Gastrocnemius medialis (tissue), 4 donors: ENCODE measurements at regions of chr1 and their contacts with region 1.

Region 1: GRCh38 chr1:230861970-230862595 is 6.2 kb downstream of the C1orf198 start:
- DNase-seq: peak; percentile 91 to 93
- ATAC-seq: peak; percentile 85
- H3K4me3 ChIP-seq: no peak overlapping the region
- H3K27ac ChIP-seq: peak overlapping the region; percentile 80 to 95 (median 89)
- H3K4me1 ChIP-seq: peaks cover 80 to 93% of the 10 kb centered on the region in 2 donors
- H3K27me3 ChIP-seq: no peaks in the 10 kb centered on the region
- CTCF ChIP-seq: no peak
- POLR2A ChIP-seq: peak; percentile 19 to 74

Region 2: DNA sequence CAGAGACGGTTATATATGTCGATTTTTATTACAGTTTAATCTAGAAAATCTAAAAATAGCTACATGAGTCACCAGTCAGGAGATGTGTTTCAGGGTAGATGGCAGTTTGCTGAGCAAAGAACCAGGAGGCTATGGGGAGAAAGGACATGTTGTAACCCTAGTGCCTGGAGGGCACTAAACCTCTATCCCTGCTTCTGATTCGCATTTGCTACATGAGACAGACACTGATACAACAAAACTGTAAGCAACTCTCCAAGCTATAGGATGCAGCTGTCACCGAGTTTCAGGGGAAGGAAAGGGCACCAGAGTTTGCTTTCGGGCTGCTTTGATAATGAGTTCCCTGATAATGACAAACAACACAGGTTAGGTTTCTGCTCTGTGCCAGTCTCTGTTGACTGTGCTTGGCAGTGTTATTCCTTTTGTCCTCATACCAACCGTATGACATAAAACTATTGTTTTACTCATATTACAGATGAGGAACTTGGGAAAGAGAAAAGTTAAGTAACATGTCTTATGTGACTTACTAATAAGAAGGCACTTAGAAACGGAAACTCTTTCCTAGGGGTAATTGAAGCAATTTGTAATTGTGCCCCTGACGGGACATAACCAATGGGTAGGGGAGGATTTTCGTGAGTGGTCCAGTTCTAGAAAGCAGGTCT is 36.9 kb before region 1 on chr1:
- in situ Hi-C with region 1: no loop called
- intact Hi-C with region 1: loop called (anchors 1 kb)
- DNase-seq: peak; percentile 51 to 75
- ATAC-seq: peak; percentile 86 to 88
- H3K4me3 ChIP-seq: peak overlapping the region in 2 of 4 donors; percentile 1 to 36
- H3K27ac ChIP-seq: peak overlapping the region; percentile 91 to 94 (median 93)
- H3K4me1 ChIP-seq: peaks cover 60 to 66% of the 10 kb centered on the region in 2 donors
- H3K27me3 ChIP-seq: no peaks in the 10 kb centered on the region
- CTCF ChIP-seq: no peak
- POLR2A ChIP-seq: peak in 1 of 2 donors; percentile 20